ENCODE measurements at regions of chr15 and their contacts with region 1.

Region 1: DNA sequence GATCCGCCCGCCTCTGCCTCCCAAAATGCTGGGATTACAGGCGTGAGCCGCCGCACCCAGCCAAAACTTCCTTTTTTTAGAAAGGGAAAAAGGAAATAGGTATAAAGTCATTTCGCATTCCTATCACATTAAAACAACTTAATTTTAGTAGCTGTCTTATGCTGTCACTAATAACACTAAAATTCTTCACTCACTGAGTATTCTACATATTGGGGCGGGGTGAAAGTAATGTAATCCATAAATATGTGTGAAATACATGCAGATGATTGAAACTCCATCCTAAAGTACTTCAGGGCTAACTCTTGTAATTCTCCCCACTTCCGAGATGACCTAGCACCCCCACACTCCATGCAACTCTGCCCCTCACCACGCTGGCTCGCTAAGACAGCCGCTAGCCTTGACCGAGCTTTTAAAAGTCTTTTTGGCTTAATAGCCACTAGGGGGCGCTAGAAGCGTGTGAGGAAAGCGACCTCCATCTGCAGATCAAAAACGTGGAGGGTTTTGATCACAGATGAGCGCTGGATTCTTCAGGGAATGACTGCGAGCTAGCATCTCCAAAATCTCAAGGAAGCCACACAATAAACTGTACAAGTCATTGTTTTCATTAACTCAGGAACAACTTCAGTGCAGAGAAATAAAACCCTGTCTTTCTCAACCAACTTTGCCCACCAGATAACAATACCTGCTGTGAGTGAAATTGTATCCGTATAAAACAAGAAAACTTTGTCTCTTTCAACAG is 129.3 kb upstream of the IGF1R start:
- DNase-seq: peak; percentile 52
- ATAC-seq: peak; percentile 86
- H3K4me3 Mint-ChIP-seq: no peak overlapping the region
- H3K27ac Mint-ChIP-seq: no peak overlapping the region
- H3K4me1 Mint-ChIP-seq: peaks cover 5% of the 10 kb centered on the region
- H3K27me3 Mint-ChIP-seq: no peaks in the 10 kb centered on the region
- CTCF ChIP-seq: peak; percentile 84

Region 2: GRCh38 chr15:98272625-98273024 is 246.4 kb before region 1 on chr15:
- CTCF ChIA-PET with region 1: no interaction called
- POLR2A ChIA-PET with region 1: no interaction called
- DNase-seq: no peak
- ATAC-seq: peak; percentile 90
- H3K4me3 Mint-ChIP-seq: no peak overlapping the region
- H3K27ac Mint-ChIP-seq: no peak overlapping the region
- H3K4me1 Mint-ChIP-seq: no peaks in the 10 kb centered on the region
- H3K27me3 Mint-ChIP-seq: no peaks in the 10 kb centered on the region
- CTCF ChIP-seq: no peak

Region 3: DNA sequence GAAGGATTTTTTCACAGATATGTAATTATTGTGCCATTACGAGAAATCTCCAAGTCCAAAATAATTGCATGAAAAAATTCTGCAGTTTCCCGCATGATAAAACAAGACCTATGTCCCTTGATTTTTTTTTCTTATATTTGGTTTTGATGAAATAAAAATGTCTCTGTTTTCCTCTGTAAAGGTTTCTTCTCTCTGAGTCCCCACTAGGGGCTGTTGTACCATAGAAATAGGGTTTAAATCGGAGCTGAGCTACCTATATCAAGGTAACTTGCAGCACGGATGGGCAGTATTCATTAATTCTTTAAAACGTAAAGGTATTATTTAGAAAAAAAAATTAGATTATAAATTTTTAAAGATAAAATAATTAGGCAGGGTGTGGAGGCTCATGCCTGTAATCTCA is 62.7 kb after region 1 on chr15:
- CTCF ChIA-PET with region 1: interaction called, 17 read pairs
- POLR2A ChIA-PET with region 1: no interaction called
- DNase-seq: no peak
- ATAC-seq: peak; percentile 63
- H3K4me3 Mint-ChIP-seq: no peak overlapping the region
- H3K27ac Mint-ChIP-seq: no peak overlapping the region
- H3K4me1 Mint-ChIP-seq: peaks cover 20% of the 10 kb centered on the region
- H3K27me3 Mint-ChIP-seq: no peaks in the 10 kb centered on the region
- CTCF ChIP-seq: no peak

Region 4: DNA sequence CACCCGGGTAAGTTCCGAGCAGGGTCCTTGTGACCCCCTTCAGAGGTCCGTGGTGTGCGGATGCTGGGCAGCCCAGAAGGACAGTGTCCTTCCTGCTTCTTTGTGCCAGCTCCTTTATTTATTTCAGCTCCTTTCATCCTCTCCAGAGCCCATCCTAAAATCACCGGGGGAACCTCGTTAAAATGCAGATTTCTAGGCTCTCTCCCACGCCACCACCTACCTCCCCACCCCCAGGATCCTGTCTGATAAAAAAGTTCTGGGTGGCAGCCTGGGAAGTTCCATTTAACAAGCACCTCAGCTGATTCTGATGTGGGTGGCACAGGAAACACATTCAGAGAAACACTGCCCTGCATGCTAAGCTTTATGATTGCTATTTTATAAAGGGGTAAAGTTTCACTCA is 116.9 kb after region 1 on chr15:
- CTCF ChIA-PET with region 1: interaction called, 15 read pairs
- POLR2A ChIA-PET with region 1: no interaction called
- DNase-seq: no peak
- ATAC-seq: peak; percentile 54
- H3K4me3 Mint-ChIP-seq: no peak overlapping the region
- H3K27ac Mint-ChIP-seq: no peak overlapping the region
- H3K4me1 Mint-ChIP-seq: peaks cover 15% of the 10 kb centered on the region
- H3K27me3 Mint-ChIP-seq: no peaks in the 10 kb centered on the region
- CTCF ChIP-seq: no peak

Region 5: DNA sequence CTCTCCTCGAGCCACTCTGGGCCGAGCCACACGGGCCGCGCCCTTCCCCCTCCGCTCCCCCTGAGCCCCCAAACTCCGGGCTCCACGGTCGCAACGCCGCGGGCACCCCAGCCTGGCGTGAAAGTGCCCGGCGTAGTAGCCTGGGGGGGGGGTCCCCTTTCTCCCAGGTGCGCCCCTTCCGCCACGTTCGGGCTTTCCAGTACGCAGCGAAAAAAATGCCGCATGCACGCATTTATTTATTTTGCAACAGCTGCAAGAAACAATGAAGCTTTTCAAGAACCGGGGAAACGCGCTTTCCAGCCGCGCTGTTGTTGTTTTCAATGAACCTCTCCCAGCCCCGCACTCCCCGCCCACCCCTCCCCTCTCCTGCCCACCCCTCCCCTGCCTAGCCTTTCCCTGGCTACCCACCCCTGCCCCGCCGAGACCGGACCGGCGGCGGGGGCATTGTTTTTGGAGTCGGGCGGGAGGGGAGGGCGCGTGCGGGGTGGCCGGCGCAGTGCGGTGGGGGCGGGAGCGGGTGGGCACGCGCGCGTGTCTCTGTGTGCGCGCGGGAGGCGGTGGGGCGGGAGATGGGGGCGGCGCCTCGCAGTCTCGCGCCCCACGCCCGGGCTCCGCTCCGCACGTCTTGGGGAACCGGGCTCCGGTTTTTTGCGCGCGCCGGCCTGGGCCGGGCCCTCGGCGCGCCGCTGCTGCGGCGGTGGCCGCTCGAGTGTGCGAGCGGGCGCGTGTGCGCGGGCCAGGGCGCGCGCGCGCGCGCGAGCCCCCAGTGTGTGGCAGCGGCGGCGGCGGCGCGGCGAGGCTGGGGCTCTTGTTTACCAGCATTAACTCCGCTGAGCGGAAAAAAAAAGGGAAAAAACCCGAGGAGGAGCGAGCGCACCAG is 129.0 kb after region 1 on chr15 and contains the start of gene IGF1R:
- CTCF ChIA-PET with region 1: interaction called, 33 read pairs
- POLR2A ChIA-PET with region 1: interaction called, 4 read pairs
- DNase-seq: peak; percentile 69
- ATAC-seq: peak; percentile 39
- H3K4me3 Mint-ChIP-seq: peak within 1 kb of the TSS; percentile 78
- H3K27ac Mint-ChIP-seq: peak within 1 kb of the TSS; percentile 93; the same call in 1 of the 2 replicates
- H3K4me1 Mint-ChIP-seq: peaks cover 28% of the 10 kb centered on the region
- H3K27me3 Mint-ChIP-seq: no peaks in the 10 kb centered on the region; the same call in 1 of the 2 replicates
- CTCF ChIP-seq: 0 out of 2 replicates have a peak, but pooled peaks have one; percentile 5
- total RNA-seq, gene IGF1R: 116 to 125 TPM (median 120 TPM) in 3 replicates

Region 6: GRCh38 chr15:98658831-98659699 is 140.1 kb after region 1 on chr15:
- CTCF ChIA-PET with region 1: interaction called, 23 read pairs
- POLR2A ChIA-PET with region 1: no interaction called
- DNase-seq: no peak
- ATAC-seq: peak; percentile 31
- H3K4me3 Mint-ChIP-seq: no peak overlapping the region
- H3K27ac Mint-ChIP-seq: peak overlapping the region; percentile 48
- H3K4me1 Mint-ChIP-seq: peaks cover 94% of the 10 kb centered on the region
- H3K27me3 Mint-ChIP-seq: no peaks in the 10 kb centered on the region
- CTCF ChIP-seq: peak; percentile 81

Region 7: DNA sequence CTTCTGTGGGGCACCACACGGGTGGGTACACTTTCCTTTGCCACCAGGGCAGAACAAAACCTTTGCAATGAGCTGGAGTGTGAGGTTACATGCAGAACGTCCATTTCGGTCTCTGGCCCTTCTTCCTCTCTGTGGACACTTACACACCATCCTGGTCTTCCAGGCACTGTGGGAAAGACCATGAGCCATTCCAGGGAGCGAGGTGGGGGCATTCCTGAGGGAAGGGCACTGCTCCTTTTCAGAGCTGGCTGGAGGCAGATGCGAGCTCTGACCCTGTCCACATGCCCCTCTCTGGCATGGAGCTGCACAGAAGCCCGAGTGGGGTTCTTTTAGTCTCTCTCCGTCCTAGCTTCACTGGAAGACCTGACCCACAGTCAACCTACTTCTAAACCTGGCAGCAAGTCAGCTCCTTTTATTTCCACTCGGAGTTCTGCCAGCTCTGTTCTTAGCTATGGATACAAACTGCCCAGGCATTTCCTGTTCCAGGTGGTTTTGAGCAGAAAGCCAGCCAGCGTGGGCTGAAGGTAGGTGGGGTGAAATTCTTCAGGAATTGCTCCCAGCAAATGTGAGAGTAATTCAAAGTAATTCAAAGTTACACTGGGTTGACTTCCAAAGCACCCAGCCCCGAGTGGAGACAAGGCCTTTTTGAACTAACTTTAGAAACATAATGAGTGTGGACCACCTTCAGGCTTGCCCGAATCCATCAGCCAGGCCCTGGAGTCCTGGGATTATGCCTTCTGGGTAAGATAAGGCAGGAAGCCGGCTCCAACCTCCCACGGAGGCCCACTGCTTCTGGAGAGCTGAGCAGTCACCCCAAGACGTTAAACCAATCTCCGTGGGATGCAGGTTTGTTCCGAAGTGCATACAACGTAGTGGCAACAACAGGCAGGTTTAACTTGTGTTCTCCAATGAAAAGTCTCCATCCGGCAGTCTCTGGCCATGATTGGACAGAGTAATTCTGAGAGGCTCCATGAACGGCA is 1541.6 kb after region 1 on chr15:
- CTCF ChIA-PET with region 1: no interaction called
- POLR2A ChIA-PET with region 1: no interaction called
- DNase-seq: no peak
- ATAC-seq: no peak
- H3K4me3 Mint-ChIP-seq: no peak overlapping the region
- H3K27ac Mint-ChIP-seq: no peak overlapping the region
- H3K4me1 Mint-ChIP-seq: no peaks in the 10 kb centered on the region
- H3K27me3 Mint-ChIP-seq: peaks cover 15% of the 10 kb centered on the region
- CTCF ChIP-seq: no peak